Activated naive CD8-positive, alpha-beta T cell treated with anti-CD3 and anti-CD28 coated beads, Interleukin-2, amount 10 ng/mL, durations not matched to agents 7 days and 5 days (primary cell): ENCODE measurements at regions of chr1 and their contacts with region 1.

Region 1: DNA sequence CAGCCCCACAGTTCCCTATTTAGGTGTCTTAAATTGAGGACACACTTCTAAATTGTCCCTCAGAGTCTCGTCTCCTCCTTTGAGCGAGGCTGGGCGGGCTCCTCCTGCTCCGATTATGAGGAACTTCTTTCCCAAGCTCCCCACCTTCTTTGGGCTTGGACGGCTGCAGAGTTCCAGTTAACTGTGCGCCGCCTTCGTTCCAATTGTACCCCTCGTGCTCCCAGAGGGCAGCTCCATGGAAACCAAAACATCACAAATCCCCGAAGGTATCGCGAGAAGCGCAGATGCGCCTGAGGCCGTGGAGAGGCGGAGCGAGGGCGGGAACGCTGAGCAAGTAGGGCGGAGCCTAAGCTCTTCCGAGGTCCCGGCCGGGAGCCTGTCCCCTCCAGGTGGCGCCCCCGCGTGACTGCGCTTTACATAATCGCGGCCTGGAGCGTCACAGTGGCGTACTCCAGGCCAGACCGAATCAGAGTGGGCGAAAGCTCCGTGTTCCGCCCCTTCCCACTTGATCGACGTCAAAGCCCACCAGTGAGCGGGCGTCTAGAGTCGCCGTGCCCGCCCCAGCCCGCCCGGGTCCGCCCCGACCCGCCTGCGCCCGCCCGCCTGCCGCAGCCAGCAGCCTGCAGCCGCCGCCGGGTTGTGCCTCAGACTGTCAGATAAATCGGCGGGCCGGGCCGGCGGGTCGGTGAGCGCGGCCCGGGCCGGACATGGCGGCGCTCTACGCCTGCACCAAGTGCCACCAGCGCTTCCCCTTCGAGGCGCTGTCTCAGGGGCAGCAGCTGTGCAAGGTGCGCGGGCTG is at the start of gene FAM76A:
- DNase-seq: peak; percentile 99
- ATAC-seq: peak; percentile 96
- H3K4me3 Mint-ChIP-seq: peak within 1 kb of the TSS; percentile 91
- H3K27ac Mint-ChIP-seq: peak within 1 kb of the TSS; percentile 95
- H3K4me1 Mint-ChIP-seq: peaks cover 15% of the 10 kb centered on the region
- H3K27me3 Mint-ChIP-seq: peaks cover 4% of the 10 kb centered on the region
- total RNA-seq, gene FAM76A: 17.5 to 18.7 TPM

Region 2: GRCh38 chr1:27671964-27672749 is 53.4 kb before region 1 on chr1 and contains the start of gene IFI6:
- POLR2A ChIA-PET with region 1: interaction called, 14 read pairs
- DNase-seq: peak; percentile 76
- ATAC-seq: peak; percentile 93
- H3K4me3 Mint-ChIP-seq: peak within 1 kb of the TSS; percentile 97
- H3K27ac Mint-ChIP-seq: peak within 1 kb of the TSS; percentile 95
- H3K4me1 Mint-ChIP-seq: peaks cover 27% of the 10 kb centered on the region
- H3K27me3 Mint-ChIP-seq: no peaks in the 10 kb centered on the region
- total RNA-seq, gene IFI6: 310 to 357 TPM

Region 3: GRCh38 chr1:27772933-27773825 is 47.6 kb after region 1 on chr1 and contains the start of gene STX12:
- POLR2A ChIA-PET with region 1: interaction called, 28 read pairs
- DNase-seq: peak; percentile 99
- ATAC-seq: peak; percentile 99
- H3K4me3 Mint-ChIP-seq: peak within 1 kb of the TSS; percentile 96
- H3K27ac Mint-ChIP-seq: peak within 1 kb of the TSS; percentile 98
- H3K4me1 Mint-ChIP-seq: peaks cover 22% of the 10 kb centered on the region
- H3K27me3 Mint-ChIP-seq: no peaks in the 10 kb centered on the region
- total RNA-seq, gene STX12: 24.2 to 31.9 TPM

Region 4: DNA sequence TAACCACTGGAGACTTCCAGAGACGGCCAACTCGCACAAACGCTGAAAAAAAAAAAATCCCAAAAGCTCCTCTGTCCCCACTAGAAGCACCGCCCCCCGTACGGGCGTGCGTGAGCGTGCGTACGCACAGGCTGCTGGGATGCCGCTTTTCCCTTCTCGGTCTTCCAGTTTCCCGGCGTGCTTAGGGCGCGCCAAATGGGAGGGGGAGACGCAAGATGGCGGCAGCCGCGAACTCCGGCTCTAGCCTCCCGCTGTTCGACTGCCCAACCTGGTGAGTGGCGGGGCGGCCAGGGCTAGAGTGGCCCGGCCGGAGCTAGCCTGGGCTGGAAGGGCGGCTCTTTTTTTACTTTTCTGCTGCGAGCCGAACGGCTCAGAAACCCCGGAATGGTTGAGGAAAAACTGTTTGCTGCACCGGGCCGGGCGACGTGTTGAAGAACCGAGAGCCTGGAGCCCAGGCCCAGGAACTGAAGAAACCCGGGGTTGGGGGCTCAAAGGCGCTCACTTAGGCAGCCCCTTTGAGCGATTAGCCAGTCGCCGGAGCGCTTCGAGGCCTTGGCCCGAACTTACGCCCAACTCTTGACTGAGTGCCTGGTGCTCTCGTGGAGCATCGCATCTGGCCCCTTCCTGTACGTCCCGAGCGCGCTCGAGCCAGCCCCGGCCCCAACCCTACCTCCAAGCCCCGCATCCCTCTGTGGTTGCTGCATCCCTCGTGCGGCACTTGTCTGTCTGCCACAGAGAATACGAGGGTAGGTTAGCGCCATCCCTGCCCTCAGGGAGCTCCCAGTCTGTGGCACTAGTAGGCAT is 105.2 kb after region 1 on chr1 and contains the start of gene PPP1R8:
- POLR2A ChIA-PET with region 1: interaction called, 15 read pairs
- DNase-seq: peak; percentile 83
- ATAC-seq: peak; percentile 98
- H3K4me3 Mint-ChIP-seq: peak within 1 kb of the TSS; percentile 88
- H3K27ac Mint-ChIP-seq: peak within 1 kb of the TSS; percentile 82
- H3K4me1 Mint-ChIP-seq: peaks cover 24% of the 10 kb centered on the region
- H3K27me3 Mint-ChIP-seq: no peaks in the 10 kb centered on the region
- total RNA-seq, gene PPP1R8: 52.9 to 54.4 TPM